Activated B cell treated with CpG ODN at 0.5 μM for 24 hours (primary cell): ENCODE measurements at regions of chr1 and their contacts with region 1.

Region 1: DNA sequence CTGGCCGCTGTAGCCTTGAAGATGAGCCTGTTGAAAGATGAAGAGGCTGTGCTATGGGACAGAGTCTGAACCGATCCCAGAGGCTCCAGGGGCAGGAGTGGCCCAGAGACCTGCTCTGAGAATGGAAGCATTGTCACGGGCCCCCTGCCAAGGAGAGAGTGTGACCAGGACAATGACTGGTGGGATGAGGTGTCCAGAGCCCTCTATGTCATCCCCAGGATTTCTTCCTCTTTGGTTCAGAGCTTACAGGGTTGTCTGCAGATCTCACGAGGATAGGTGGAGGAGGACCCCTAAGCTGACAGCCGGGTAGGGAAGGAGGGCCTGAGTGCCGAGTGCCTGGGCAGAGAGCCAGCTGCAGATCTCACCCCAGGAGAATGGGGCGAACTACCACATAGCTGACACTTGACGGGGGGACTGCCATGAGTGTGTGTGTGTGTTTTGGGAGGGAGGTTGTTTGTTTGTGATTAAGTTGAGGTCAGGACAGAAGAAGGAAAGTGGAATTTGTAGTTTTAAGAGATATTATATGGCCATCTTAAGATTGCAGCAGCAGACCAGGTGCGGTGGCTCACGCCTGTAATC is 25.4 kb downstream of the PIK3CD start:
- DNase-seq: no peak
- ATAC-seq: no peak
- H3K4me3 Mint-ChIP-seq: peak overlapping the region; percentile 15
- H3K27ac Mint-ChIP-seq: peak overlapping the region; percentile 38
- H3K4me1 Mint-ChIP-seq: peaks cover 71% of the 10 kb centered on the region
- H3K27me3 Mint-ChIP-seq: no peaks in the 10 kb centered on the region
- CTCF ChIP-seq: no peak

Region 2: GRCh38 chr1:9659328-9659998 is 17.4 kb before region 1 on chr1:
- CTCF ChIA-PET with region 1: interaction called, 8 read pairs
- POLR2A ChIA-PET with region 1: interaction called, 24 read pairs
- intact Hi-C with region 1: no loop called
- DNase-seq: no peak
- ATAC-seq: no peak
- H3K4me3 Mint-ChIP-seq: peak overlapping the region; percentile 19
- H3K27ac Mint-ChIP-seq: peak overlapping the region; percentile 69
- H3K4me1 Mint-ChIP-seq: peaks cover 83% of the 10 kb centered on the region
- H3K27me3 Mint-ChIP-seq: no peaks in the 10 kb centered on the region
- CTCF ChIP-seq: no peak

Region 3: GRCh38 chr1:9665193-9665592 is 11.7 kb before region 1 on chr1:
- CTCF ChIA-PET with region 1: no interaction called
- POLR2A ChIA-PET with region 1: interaction called, 12 read pairs
- intact Hi-C with region 1: no loop called
- DNase-seq: no peak
- ATAC-seq: no peak
- H3K4me3 Mint-ChIP-seq: no peak overlapping the region
- H3K27ac Mint-ChIP-seq: peak overlapping the region; percentile 46
- H3K4me1 Mint-ChIP-seq: peaks cover 58% of the 10 kb centered on the region
- H3K27me3 Mint-ChIP-seq: no peaks in the 10 kb centered on the region
- CTCF ChIP-seq: no peak